ENCODE measurements at regions of chr22 and their contacts with region 1.

Region 1: GRCh38 chr22:35350539-35351503 is 30.1 kb upstream of the HMOX1 start:
- DNase-seq: peak; percentile 93
- ATAC-seq: peak; percentile 90
- H3K4me3 Mint-ChIP-seq: peak overlapping the region; percentile 72
- H3K27ac Mint-ChIP-seq: peak overlapping the region; percentile 55
- H3K4me1 Mint-ChIP-seq: peaks cover 28% of the 10 kb centered on the region
- H3K27me3 Mint-ChIP-seq: peaks cover 6% of the 10 kb centered on the region

Region 2: DNA sequence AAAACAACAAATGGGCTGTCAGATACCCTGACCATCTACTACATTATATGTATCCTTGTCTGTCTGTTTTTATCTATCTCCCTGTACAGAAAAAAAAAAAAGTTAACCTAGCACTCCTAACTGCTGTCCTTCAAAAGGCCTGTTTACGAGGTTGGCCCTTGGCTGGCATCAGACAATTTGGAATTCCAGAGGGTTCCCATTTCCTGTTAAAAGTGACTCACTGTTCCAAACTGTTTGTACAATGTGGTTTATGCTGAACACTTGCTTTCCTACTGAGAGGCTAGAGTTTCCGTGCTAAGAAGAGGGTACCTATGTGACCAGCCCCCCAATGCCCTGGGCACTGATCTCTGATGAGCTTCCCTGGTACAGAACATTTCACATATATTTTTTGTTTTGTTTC is 159.4 kb before region 1 on chr22:
- CTCF ChIA-PET with region 1: no interaction called
- POLR2A ChIA-PET with region 1: no interaction called
- intact Hi-C with region 1: no loop called
- DNase-seq: no peak
- ATAC-seq: no peak
- H3K4me3 Mint-ChIP-seq: no peak overlapping the region
- H3K27ac Mint-ChIP-seq: no peak overlapping the region
- H3K4me1 Mint-ChIP-seq: no peaks in the 10 kb centered on the region
- H3K27me3 Mint-ChIP-seq: no peaks in the 10 kb centered on the region

Region 3: DNA sequence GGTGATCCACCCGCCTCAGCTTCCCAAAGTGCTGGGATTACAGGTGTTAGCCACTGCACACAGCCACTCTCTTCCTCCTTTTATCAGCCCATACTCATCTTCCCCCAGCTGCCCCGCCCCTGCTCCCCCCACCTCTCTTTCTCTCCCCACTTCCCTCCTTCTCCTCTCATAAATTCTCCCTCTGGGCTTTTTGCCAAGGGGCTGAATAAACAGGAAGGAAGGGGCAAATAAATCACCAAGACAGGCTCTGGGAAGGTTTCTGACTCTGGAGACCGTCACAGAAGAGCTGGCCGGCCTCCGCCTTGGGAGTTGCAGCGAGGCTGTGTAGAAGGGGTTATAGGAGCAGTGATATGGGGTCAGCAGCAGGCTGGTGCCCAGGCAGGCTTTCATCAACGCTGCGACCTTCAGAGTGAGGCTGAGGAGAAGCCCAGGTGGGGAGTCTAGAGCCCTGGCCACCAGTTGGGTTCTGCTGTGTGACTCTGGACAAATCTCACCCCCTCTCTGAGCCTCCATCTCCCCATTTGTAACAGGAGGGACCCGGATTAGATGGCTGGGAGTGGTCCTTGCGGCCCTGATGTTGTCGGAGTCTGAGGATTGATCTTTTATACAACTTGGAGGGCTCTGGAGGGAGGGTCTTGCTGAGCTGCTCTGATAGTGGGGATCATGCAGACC is 127.2 kb after region 1 on chr22:
- CTCF ChIA-PET with region 1: no interaction called
- POLR2A ChIA-PET with region 1: no interaction called
- intact Hi-C with region 1: loop called in 1 of 2 experiments (anchors 10 kb)
- DNase-seq: no peak
- ATAC-seq: no peak
- H3K4me3 Mint-ChIP-seq: no peak overlapping the region
- H3K27ac Mint-ChIP-seq: no peak overlapping the region
- H3K4me1 Mint-ChIP-seq: no peaks in the 10 kb centered on the region
- H3K27me3 Mint-ChIP-seq: peaks cover 32% of the 10 kb centered on the region

Region 4: DNA sequence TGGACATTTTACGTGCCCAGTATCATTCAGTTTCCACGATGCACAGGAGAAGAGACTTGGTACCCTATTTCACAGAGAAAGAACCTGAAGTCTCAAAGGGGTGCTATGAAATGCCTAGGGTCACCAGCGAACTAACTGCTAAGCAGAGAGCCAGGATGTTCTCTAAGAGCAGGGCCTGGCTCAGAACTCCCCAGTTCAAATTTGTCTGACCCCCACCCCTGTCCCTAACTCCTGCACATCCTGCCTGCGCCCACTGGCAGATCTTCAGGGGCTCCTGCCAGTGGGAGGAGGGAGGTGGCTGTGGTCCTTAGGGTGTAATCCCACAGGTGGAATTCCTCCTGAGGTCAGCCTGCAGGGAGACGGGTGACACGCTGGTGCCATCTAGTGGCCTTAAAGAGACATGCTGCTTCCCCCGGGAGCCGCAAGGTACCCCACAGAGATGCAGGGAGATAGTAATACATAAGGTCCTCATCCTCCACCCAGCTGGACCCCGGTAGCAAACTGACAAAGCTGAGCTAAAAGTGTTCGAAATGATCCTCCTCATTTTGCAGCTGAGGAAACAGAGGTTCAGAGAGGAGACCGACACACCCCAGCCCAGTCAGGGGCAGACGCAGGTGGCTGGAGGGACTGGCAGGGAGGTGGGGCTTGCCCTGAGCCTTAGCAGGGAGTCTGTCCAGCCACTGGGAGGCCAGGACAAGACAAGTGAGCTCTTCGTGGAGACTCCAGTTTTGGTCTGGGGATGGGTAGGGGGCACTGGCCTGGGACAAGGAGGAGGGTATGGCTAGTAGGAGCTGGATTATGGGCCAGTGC is 232.2 kb after region 1 on chr22:
- CTCF ChIA-PET with region 1: interaction called, 20 read pairs
- POLR2A ChIA-PET with region 1: no interaction called
- intact Hi-C with region 1: loop called (anchors 1 kb)
- DNase-seq: peak; percentile 66
- ATAC-seq: peak; percentile 80
- H3K4me3 Mint-ChIP-seq: no peak overlapping the region
- H3K27ac Mint-ChIP-seq: no peak overlapping the region
- H3K4me1 Mint-ChIP-seq: no peaks in the 10 kb centered on the region
- H3K27me3 Mint-ChIP-seq: peaks cover 4% of the 10 kb centered on the region

Region 5: GRCh38 chr22:35914665-35915476 is 564.0 kb after region 1 on chr22:
- CTCF ChIA-PET with region 1: no interaction called
- POLR2A ChIA-PET with region 1: no interaction called
- intact Hi-C with region 1: loop called (anchors 5 kb)
- DNase-seq: no peak
- ATAC-seq: peak; percentile 51
- H3K4me3 Mint-ChIP-seq: peak overlapping the region; percentile 38
- H3K27ac Mint-ChIP-seq: peak overlapping the region; percentile 24
- H3K4me1 Mint-ChIP-seq: peaks cover 17% of the 10 kb centered on the region
- H3K27me3 Mint-ChIP-seq: peaks cover 2% of the 10 kb centered on the region

Region 6: GRCh38 chr22:36123673-36124630 is 773.1 kb after region 1 on chr22:
- CTCF ChIA-PET with region 1: interaction called, 3 read pairs
- POLR2A ChIA-PET with region 1: no interaction called
- intact Hi-C with region 1: loop called (anchors 1 to 10 kb)
- DNase-seq: peak; percentile 97
- ATAC-seq: peak; percentile 99
- H3K4me3 Mint-ChIP-seq: peak overlapping the region; percentile 62
- H3K27ac Mint-ChIP-seq: peak overlapping the region; percentile 83
- H3K4me1 Mint-ChIP-seq: peaks cover 10% of the 10 kb centered on the region
- H3K27me3 Mint-ChIP-seq: no peaks in the 10 kb centered on the region